Testis (tissue), 5 donors: ENCODE measurements at regions of chr6 and their contacts with region 1.

Region 1: DNA sequence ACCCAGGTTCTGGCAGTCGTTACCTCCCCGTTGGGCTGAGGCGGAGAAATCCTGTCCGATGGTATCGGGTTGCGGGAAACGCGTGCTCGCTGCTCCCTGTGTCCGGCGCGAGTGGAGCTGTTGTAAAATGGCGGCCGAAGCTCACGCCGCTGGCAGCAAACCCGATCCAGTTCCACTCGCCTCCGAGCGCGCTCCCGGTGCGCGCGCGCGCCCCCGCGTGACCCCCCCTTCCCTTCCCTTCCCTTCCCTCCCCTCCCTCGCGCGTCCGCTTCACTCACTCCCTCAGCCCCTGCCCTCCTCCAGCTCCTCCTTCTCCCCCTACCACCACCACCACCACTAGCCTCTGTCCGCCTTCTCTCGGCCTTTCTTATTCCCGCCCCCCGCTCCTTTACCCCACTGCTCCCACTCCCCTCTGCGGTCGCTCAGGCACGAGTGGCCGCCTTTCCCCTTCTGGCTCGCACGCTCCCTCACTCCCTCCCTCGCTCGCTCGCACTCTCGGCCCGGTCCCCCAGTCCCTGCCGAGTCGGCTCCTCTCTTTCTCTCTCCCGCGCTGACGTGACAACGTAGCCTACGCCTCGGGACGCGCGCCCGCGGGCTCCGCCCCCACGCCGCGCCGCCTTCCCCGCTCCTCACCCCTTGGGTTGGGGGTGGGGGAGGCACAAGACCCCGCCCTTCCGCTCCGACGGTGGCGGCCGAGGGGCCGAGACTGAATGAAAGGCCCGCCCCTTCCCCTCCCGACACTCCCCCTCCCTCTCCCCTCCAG is at the start of gene SYNCRIP:
- DNase-seq: peak; percentile 99
- H3K4me3 ChIP-seq: peak within 1 kb of the TSS; percentile 89 to 94
- H3K27ac ChIP-seq: peak within 1 kb of the TSS; percentile 99 to 100
- H3K4me1 ChIP-seq: no peaks in the 10 kb centered on the region
- H3K27me3 ChIP-seq: no peaks in the 10 kb centered on the region
- CTCF ChIP-seq: no peak
- POLR2A ChIP-seq: peak; percentile 90
- total RNA-seq, gene SYNCRIP: 51.6 to 55.1 TPM

Region 2: DNA sequence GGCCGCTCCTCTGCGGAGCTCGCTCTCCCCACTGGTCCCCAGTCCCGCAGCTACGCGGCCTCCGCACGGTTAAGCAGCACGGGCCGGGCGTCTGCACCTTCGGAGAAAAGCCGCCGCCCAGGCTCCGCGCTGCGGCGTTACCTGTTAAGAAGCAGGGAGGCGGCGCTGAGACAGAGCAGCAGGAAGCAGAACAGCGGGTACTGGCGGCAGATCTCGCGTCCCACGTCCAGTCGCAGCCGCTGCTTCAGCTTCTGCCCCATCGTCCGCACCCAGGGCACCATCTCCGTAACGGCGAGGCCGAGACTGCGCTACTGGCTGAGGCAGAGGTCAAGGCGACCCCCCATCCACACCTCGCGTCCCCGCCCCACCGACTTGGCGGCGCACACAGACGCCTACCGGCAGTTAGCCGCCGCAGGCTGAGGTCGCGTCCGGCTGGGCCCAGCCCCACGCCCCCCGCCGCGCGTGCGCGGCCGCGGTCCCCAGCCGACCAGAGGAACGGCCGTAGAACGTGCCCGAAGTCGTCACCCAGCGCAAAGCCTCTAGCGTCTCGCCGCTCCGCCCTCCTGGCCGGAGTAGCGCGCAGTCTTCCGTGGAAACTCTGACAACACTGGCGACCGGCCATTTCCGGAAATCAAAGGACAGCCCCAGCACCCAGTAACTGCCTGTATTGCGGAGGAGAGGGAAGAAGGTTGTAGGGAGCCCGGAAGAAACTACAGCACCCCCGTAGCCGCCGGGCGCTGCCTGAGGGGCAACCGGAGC is 49.3 kb before region 1 on chr6 and contains the start of gene SNX14:
- intact Hi-C with region 1: loop called (anchors 5 kb)
- DNase-seq: peak; percentile 94
- H3K4me3 ChIP-seq: peak within 1 kb of the TSS; percentile 76 to 91
- H3K27ac ChIP-seq: peak within 1 kb of the TSS; percentile 93 to 94
- H3K4me1 ChIP-seq: peaks cover 6% of the 10 kb centered on the region
- H3K27me3 ChIP-seq: no peaks in the 10 kb centered on the region
- CTCF ChIP-seq: peak in 1 of 3 experiments; percentile 9
- POLR2A ChIP-seq: no peak
- total RNA-seq, gene SNX14: 108 to 142 TPM

Region 3: GRCh38 chr6:85678602-85679444 is 35.9 kb after region 1 on chr6:
- intact Hi-C with region 1: loop called (anchors 5 kb)
- DNase-seq: peak; percentile 100
- H3K4me3 ChIP-seq: peak overlapping the region; percentile 90 to 94
- H3K27ac ChIP-seq: peak overlapping the region; percentile 76 to 94
- H3K4me1 ChIP-seq: peaks cover 12% of the 10 kb centered on the region
- H3K27me3 ChIP-seq: no peaks in the 10 kb centered on the region
- CTCF ChIP-seq: no peak
- POLR2A ChIP-seq: peak; percentile 96